MCF 10A (cell line): ENCODE measurements at regions of chr1 and their contacts with region 1.

Region 1: DNA sequence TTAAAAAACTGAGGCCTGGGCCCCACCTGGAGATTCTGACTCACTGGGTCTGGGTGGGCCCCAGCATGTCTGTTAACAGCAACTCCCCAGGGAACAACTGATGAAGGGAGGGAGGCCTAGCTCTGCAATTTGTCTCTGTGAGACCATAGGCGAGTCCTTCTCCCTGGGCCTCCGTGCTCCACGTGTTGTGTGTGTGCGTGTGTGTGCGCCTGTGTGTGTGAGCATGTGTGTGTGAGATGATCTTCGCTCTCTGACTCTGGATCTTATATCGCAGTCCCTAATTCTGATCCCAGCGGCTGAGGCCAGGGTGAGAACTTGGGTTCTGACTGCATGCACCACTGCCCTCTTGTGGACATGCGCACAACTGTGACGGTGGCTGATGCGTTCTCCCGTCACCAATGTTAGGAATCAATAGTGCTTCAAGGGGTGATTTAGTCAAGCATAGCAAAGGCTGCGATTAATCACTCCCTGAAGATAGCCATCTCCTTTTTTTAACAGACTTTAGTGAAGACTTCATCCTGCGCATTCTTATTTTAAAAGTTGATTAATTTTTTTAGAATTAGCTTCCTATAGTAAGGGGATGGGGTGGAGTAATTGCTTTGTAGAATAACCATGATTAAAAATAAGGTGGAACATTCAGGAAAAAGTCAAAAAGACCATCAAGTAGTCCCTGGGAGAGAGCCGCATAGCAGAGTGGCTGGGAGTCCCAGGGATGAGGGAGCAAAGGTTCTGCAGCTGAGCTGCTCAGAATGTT is 62.4 kb upstream of the USP24 start:
- DNase-seq: peak; percentile 79
- H3K4me3 Mint-ChIP-seq: no peak overlapping the region
- H3K27ac Mint-ChIP-seq: no peak overlapping the region
- H3K4me1 Mint-ChIP-seq: peaks cover 6% of the 10 kb centered on the region
- H3K27me3 Mint-ChIP-seq: no peaks in the 10 kb centered on the region
- CTCF ChIP-seq: peak; percentile 78

Region 2: GRCh38 chr1:55071477-55071876 is 206.1 kb before region 1 on chr1:
- CTCF ChIA-PET with region 1: interaction called, 7 read pairs
- POLR2A ChIA-PET with region 1: no interaction called
- intact Hi-C with region 1: loop called (anchors 1 kb)
- DNase-seq: peak; percentile 60
- H3K4me3 Mint-ChIP-seq: no peak overlapping the region
- H3K27ac Mint-ChIP-seq: no peak overlapping the region
- H3K4me1 Mint-ChIP-seq: no peaks in the 10 kb centered on the region
- H3K27me3 Mint-ChIP-seq: no peaks in the 10 kb centered on the region
- CTCF ChIP-seq: no peak

Region 3: DNA sequence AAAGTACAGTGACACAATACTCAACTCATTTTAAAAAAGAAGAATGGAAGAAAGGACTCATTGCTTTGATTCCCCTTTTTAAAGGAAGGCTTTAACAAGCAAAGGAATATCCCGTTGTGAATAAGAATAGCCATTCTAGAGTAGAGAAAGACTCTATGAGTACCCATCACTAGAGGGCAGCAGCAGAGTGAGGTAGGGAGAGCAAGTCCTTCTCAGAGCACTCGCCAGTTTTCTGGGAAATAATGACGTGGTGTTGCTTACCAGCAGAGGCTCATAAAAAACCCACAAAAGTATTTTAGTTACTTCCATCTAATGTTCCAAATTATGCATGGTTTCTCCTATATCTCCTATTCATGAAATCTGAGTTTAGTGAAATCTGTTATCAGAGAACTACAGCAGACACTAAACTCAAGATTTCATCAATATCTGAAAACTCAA is 137.0 kb before region 1 on chr1:
- CTCF ChIA-PET with region 1: interaction called, 194 read pairs
- POLR2A ChIA-PET with region 1: interaction called, 3 read pairs
- intact Hi-C with region 1: loop called (anchors 1 kb)
- DNase-seq: peak; percentile 86
- H3K4me3 Mint-ChIP-seq: no peak overlapping the region
- H3K27ac Mint-ChIP-seq: peak overlapping the region; percentile 46
- H3K4me1 Mint-ChIP-seq: peaks cover 5% of the 10 kb centered on the region
- H3K27me3 Mint-ChIP-seq: no peaks in the 10 kb centered on the region
- CTCF ChIP-seq: peak; percentile 66

Region 4: GRCh38 chr1:55154616-55155015 is 122.9 kb before region 1 on chr1:
- CTCF ChIA-PET with region 1: interaction called, 15 read pairs
- POLR2A ChIA-PET with region 1: interaction called, 4 read pairs
- intact Hi-C with region 1: no loop called
- DNase-seq: no peak
- H3K4me3 Mint-ChIP-seq: no peak overlapping the region
- H3K27ac Mint-ChIP-seq: no peak overlapping the region
- H3K4me1 Mint-ChIP-seq: no peaks in the 10 kb centered on the region
- H3K27me3 Mint-ChIP-seq: no peaks in the 10 kb centered on the region
- CTCF ChIP-seq: no peak

Region 5: GRCh38 chr1:55164906-55165305 is 112.6 kb before region 1 on chr1:
- CTCF ChIA-PET with region 1: interaction called, 19 read pairs
- POLR2A ChIA-PET with region 1: interaction called, 3 read pairs
- intact Hi-C with region 1: no loop called
- DNase-seq: no peak
- H3K4me3 Mint-ChIP-seq: no peak overlapping the region
- H3K27ac Mint-ChIP-seq: no peak overlapping the region
- H3K4me1 Mint-ChIP-seq: peaks cover 3% of the 10 kb centered on the region
- H3K27me3 Mint-ChIP-seq: no peaks in the 10 kb centered on the region
- CTCF ChIP-seq: no peak

Region 6: GRCh38 chr1:55215256-55216021 is 62.1 kb before region 1 on chr1 and contains the start of gene USP24:
- CTCF ChIA-PET with region 1: interaction called, 7 read pairs
- POLR2A ChIA-PET with region 1: interaction called, 7 read pairs
- intact Hi-C with region 1: loop called (anchors 2 kb)
- DNase-seq: peak; percentile 81
- H3K4me3 Mint-ChIP-seq: peak within 1 kb of the TSS; percentile 85
- H3K27ac Mint-ChIP-seq: peak within 1 kb of the TSS; percentile 96
- H3K4me1 Mint-ChIP-seq: peaks cover 53% of the 10 kb centered on the region
- H3K27me3 Mint-ChIP-seq: no peaks in the 10 kb centered on the region
- CTCF ChIP-seq: no peak
- total RNA-seq, gene USP24: 38.0 and 45.7 TPM in 2 replicates

Region 7: DNA sequence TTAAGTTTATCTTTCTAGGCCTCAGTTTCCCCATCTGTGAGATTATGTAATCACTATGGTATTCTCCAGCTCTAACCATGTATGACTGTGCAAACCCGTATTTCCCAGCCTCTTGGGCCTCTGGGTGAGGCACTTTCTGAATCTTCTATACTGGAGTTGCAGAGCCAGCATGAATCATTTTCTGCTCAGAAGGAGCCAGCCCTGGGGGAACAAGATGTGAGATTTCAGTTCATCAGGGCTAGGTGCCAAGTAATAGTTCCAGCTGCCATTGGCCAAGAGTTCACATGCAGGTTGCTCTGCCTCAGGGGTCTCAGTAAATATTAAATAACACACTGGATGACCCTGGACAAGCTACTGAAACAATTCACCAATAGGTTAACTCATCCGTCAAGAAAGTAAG is 14.7 kb before region 1 on chr1:
- CTCF ChIA-PET with region 1: interaction called, 16 read pairs
- POLR2A ChIA-PET with region 1: interaction called, 3 read pairs
- intact Hi-C with region 1: no loop called
- DNase-seq: peak; percentile 86
- H3K4me3 Mint-ChIP-seq: no peak overlapping the region
- H3K27ac Mint-ChIP-seq: peak overlapping the region; percentile 65
- H3K4me1 Mint-ChIP-seq: peaks cover 13% of the 10 kb centered on the region
- H3K27me3 Mint-ChIP-seq: no peaks in the 10 kb centered on the region
- CTCF ChIP-seq: no peak